HepG2 (cell line): ENCODE measurements at regions of chr6 and their contacts with region 1.

Region 1: GRCh38 chr6:149840345-149841075 is 23.6 kb downstream of the LRP11 start:
- DNase-seq: peak; percentile 82
- ATAC-seq: peak; percentile 100
- H3K4me3 ChIP-seq: no peak overlapping the region
- H3K27ac ChIP-seq: no peak overlapping the region
- H3K4me1 ChIP-seq: no peaks in the 10 kb centered on the region
- H3K27me3 ChIP-seq: no peaks in the 10 kb centered on the region
- CTCF ChIP-seq: peak; percentile 96
- EP300 ChIP-seq: no peak
- POLR2A ChIP-seq: no peak
- RAD21 ChIP-seq: peak; percentile 97

Region 2: DNA sequence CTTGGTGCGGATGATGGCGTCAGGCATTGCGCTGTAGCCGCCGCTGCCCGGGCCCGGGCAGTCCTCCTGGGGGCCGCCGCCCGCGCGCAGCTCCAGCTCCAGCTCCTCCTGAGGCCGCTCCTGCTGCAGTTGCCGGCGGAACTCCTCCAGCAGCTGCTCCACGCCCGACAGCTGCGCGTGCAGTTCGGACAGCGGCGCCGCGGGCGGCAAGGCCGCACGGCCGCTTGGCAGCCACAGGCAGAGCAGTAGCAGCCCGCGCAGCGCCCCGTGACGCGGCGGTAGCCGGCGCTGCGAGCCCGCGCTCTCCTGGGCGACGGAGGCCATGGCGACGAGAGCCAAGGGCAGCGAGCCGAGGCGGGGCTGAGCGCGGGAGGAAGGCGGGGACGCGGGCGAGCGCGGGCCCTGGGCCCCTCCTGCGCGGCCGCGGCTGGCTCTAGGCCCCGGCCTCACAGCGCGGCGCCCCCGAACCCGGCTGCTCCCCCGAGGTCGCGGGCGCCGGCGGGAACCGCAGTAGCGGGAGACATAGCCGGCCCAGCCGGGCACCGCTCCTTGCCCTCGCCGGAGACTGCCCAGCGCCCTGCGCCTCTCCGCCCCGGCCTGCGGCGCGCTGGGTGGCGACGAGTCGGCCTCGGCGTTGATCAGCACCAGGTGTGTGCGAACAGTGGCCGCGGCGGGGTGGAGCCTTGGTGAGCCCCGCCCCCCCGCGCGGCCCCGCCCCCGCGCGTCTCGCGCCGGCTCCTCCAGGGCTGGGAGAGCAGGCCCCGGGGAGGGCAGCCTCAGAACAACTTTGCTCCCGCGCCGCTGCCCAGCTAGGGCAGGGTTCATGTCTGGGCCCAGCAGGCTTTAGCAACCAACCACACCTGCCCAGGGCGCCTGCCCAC is 23.4 kb after region 1 on chr6 and contains the start of gene LRP11:
- CTCF ChIA-PET with region 1: interaction called, 37 read pairs
- POLR2A ChIA-PET with region 1: interaction called, 56 read pairs
- in situ Hi-C with region 1: no loop called
- intact Hi-C with region 1: loop called (anchors 1 kb)
- DNase-seq: peak; percentile 82
- ATAC-seq: peak; percentile 73
- H3K4me3 ChIP-seq: peak within 1 kb of the TSS; percentile 66 to 93 (median 83)
- H3K27ac ChIP-seq: peak within 1 kb of the TSS; percentile 87
- H3K4me1 ChIP-seq: peaks cover 63% of the 10 kb centered on the region
- H3K27me3 ChIP-seq: no peaks in the 10 kb centered on the region; a peak in 1 of 5 replicates
- CTCF ChIP-seq: no peak; the same call in 1 of the 2 replicates
- EP300 ChIP-seq: no peak; a peak in 1 of 4 replicates
- POLR2A ChIP-seq: peak in 1 of 2 experiments; percentile 88; a peak in 2 of 4 replicates
- RAD21 ChIP-seq: peak; percentile 62
- total RNA-seq, gene LRP11: 32.1 and 48.9 TPM in 2 replicates

Region 3: GRCh38 chr6:149903938-149904611 is 63.6 kb after region 1 on chr6:
- CTCF ChIA-PET with region 1: interaction called, 12 read pairs
- POLR2A ChIA-PET with region 1: no interaction called
- in situ Hi-C with region 1: no loop called
- intact Hi-C with region 1: loop called (anchors 1 kb)
- DNase-seq: no peak
- ATAC-seq: peak; percentile 81
- H3K4me3 ChIP-seq: no peak overlapping the region
- H3K27ac ChIP-seq: no peak overlapping the region
- H3K4me1 ChIP-seq: peaks cover 9% of the 10 kb centered on the region; the same call in 1 of the 2 replicates
- H3K27me3 ChIP-seq: peaks cover 10 to 53% of the 10 kb centered on the region in 2 experiments
- CTCF ChIP-seq: peak; percentile 53
- EP300 ChIP-seq: no peak
- POLR2A ChIP-seq: no peak
- RAD21 ChIP-seq: no peak

Region 4: DNA sequence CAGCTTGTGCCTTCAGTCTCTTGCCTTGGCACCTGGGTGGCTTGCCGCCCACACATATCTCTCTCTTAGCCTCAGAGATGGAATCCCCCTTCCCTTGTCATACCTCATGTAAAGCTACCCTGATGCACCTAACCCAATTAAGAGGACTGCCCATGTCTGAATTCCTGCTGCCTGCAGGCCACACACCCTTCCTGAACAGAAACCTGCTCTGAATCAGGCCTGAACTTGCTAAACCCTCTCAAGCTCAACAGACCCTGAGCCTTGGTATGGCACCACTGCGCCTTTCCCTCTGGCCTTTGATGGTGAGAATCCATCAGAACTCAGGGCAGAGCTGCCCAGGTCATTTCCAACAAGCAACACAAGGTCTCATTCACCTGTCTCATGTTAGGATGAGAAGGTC is 77.2 kb after region 1 on chr6:
- CTCF ChIA-PET with region 1: interaction called, 3 read pairs
- POLR2A ChIA-PET with region 1: no interaction called
- in situ Hi-C with region 1: loop called (anchors 5 kb)
- intact Hi-C with region 1: loop called (anchors 1 kb)
- DNase-seq: no peak
- ATAC-seq: no peak
- H3K4me3 ChIP-seq: no peak overlapping the region
- H3K27ac ChIP-seq: no peak overlapping the region
- H3K4me1 ChIP-seq: peaks cover 7% of the 10 kb centered on the region; the same call in 1 of the 2 replicates
- H3K27me3 ChIP-seq: peaks cover 10 to 63% of the 10 kb centered on the region in 2 experiments
- CTCF ChIP-seq: no peak
- EP300 ChIP-seq: no peak
- POLR2A ChIP-seq: no peak
- RAD21 ChIP-seq: no peak

Region 5: GRCh38 chr6:149925974-149926777 is 85.7 kb after region 1 on chr6:
- CTCF ChIA-PET with region 1: interaction called, 19 read pairs
- POLR2A ChIA-PET with region 1: no interaction called
- in situ Hi-C with region 1: loop called (anchors 5 kb)
- intact Hi-C with region 1: loop called (anchors 1 kb)
- DNase-seq: peak; percentile 74
- ATAC-seq: peak; percentile 90
- H3K4me3 ChIP-seq: peak overlapping the region; percentile 65 to 82 (median 71)
- H3K27ac ChIP-seq: no peak overlapping the region
- H3K4me1 ChIP-seq: peaks cover 34% of the 10 kb centered on the region
- H3K27me3 ChIP-seq: peaks cover 13 to 55% of the 10 kb centered on the region in 2 experiments
- CTCF ChIP-seq: peak; percentile 99
- EP300 ChIP-seq: no peak
- POLR2A ChIP-seq: no peak
- RAD21 ChIP-seq: peak; percentile 93

Region 6: DNA sequence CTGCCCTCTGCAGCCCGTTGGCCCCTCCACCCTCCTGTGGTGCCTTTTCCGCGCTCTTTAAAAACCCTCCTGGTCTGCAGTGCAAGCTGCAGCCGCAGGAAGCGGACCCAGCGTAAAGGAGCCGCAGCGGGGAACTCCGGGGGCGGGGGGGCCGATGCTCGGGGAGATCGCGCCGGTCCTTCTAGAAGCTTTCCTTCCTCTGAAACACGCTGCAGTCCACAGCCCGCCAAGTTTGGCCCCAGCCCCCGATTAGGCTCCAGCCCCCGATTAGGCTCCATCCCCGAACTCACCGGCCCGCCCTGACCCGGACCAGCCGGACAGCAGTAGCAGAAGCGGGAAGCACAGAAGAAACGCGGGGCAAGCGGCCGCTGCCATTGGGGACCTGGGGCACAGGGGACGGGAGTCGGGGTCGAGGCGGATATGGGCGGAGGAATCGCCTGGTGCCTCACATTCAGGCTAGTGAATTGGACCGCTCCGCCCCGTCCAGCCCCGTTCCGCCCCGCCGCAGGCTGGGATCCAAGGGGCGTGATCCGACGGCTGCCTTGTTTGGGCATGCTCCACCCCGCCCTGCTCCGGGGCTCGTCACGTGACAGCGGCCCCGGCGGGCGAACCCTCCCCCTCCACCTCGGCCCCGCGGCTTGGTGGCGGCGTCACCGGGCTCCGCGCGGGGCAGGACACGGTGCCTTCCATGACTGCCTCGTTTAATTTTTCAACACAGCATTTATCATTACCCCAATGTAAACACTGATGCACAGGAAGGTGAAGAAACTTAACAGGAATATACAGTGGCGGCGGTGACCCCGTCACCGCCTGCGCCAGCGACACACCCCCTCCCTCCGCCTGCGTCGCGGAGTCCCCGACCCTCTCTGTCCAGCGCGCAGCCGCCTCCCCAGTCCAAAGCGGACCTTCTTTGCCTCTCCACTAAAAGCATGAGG is 164.5 kb after region 1 on chr6:
- CTCF ChIA-PET with region 1: no interaction called
- POLR2A ChIA-PET with region 1: no interaction called
- in situ Hi-C with region 1: loop called (anchors 10 kb)
- intact Hi-C with region 1: no loop called
- DNase-seq: peak; percentile 84
- ATAC-seq: peak; percentile 94
- H3K4me3 ChIP-seq: peak overlapping the region; percentile 59 to 78 (median 77)
- H3K27ac ChIP-seq: no peak overlapping the region
- H3K4me1 ChIP-seq: peaks cover 13% of the 10 kb centered on the region; the same call in 1 of the 2 replicates
- H3K27me3 ChIP-seq: peaks cover 5 to 35% of the 10 kb centered on the region in 2 experiments; a peak in 4 of 5 replicates
- CTCF ChIP-seq: no peak
- EP300 ChIP-seq: no peak
- POLR2A ChIP-seq: no peak
- RAD21 ChIP-seq: no peak

Region 7: GRCh38 chr6:150016324-150017185 is 176.0 kb after region 1 on chr6:
- CTCF ChIA-PET with region 1: interaction called, 6 read pairs
- POLR2A ChIA-PET with region 1: no interaction called
- in situ Hi-C with region 1: no loop called
- intact Hi-C with region 1: loop called (anchors 2 kb)
- DNase-seq: peak; percentile 69
- ATAC-seq: peak; percentile 83
- H3K4me3 ChIP-seq: no peak overlapping the region
- H3K27ac ChIP-seq: no peak overlapping the region
- H3K4me1 ChIP-seq: no peaks in the 10 kb centered on the region
- H3K27me3 ChIP-seq: peaks cover 4 to 30% of the 10 kb centered on the region in 2 experiments
- CTCF ChIP-seq: peak; percentile 81
- EP300 ChIP-seq: no peak
- POLR2A ChIP-seq: no peak
- RAD21 ChIP-seq: peak; percentile 83